ENCODE measurements at regions of chr10 and their contacts with region 1.

Region 1: GRCh38 chr10:33248638-33249037 is 85.8 kb downstream of the NRP1 start:
- DNase-seq: peak; percentile 69 to 78 (median 74)
- H3K4me3 ChIP-seq: peak overlapping the region in 1 of 2 donors; percentile 12
- H3K4me3 Mint-ChIP-seq: peak overlapping the region; percentile 55 to 86 (median 80)
- H3K27ac ChIP-seq: peak overlapping the region; percentile 2
- H3K27ac Mint-ChIP-seq: peak overlapping the region; percentile 61 to 90 (median 82)
- H3K4me1 ChIP-seq: peaks cover 33% of the 10 kb centered on the region
- H3K4me1 Mint-ChIP-seq: peaks cover 26 to 72% (median 37%) of the 10 kb centered on the region in 4 donors
- H3K27me3 ChIP-seq: no peaks in the 10 kb centered on the region
- H3K27me3 Mint-ChIP-seq: no peaks in the 10 kb centered on the region

Region 2: GRCh38 chr10:33199731-33200232 is 48.9 kb before region 1 on chr10:
- CTCF ChIA-PET with region 1: no interaction called
- POLR2A ChIA-PET with region 1: no interaction called
- intact Hi-C with region 1: no loop called
- DNase-seq: no peak
- H3K4me3 ChIP-seq: no peak overlapping the region
- H3K4me3 Mint-ChIP-seq: no peak overlapping the region
- H3K27ac ChIP-seq: no peak overlapping the region
- H3K27ac Mint-ChIP-seq: no peak overlapping the region
- H3K4me1 ChIP-seq: no peaks in the 10 kb centered on the region
- H3K4me1 Mint-ChIP-seq: no peaks in the 10 kb centered on the region
- H3K27me3 ChIP-seq: no peaks in the 10 kb centered on the region
- H3K27me3 Mint-ChIP-seq: peaks cover 0 to 2% of the 10 kb centered on the region in 2 donors

Region 3: GRCh38 chr10:33211106-33211878 is 37.3 kb before region 1 on chr10:
- CTCF ChIA-PET with region 1: no interaction called
- POLR2A ChIA-PET with region 1: no interaction called
- intact Hi-C with region 1: loop called (anchors 5 kb)
- DNase-seq: peak in 3 of 5 donors; percentile 5 to 10 (median 5)
- H3K4me3 ChIP-seq: no peak overlapping the region
- H3K4me3 Mint-ChIP-seq: peak overlapping the region in 5 of 8 donors; percentile 29 to 77 (median 39)
- H3K27ac ChIP-seq: no peak overlapping the region
- H3K27ac Mint-ChIP-seq: peak overlapping the region; percentile 4 to 87 (median 78)
- H3K4me1 ChIP-seq: peaks cover 6% of the 10 kb centered on the region
- H3K4me1 Mint-ChIP-seq: peaks cover 11 to 25% (median 19%) of the 10 kb centered on the region in 4 donors
- H3K27me3 ChIP-seq: no peaks in the 10 kb centered on the region
- H3K27me3 Mint-ChIP-seq: no peaks in the 10 kb centered on the region

Region 4: DNA sequence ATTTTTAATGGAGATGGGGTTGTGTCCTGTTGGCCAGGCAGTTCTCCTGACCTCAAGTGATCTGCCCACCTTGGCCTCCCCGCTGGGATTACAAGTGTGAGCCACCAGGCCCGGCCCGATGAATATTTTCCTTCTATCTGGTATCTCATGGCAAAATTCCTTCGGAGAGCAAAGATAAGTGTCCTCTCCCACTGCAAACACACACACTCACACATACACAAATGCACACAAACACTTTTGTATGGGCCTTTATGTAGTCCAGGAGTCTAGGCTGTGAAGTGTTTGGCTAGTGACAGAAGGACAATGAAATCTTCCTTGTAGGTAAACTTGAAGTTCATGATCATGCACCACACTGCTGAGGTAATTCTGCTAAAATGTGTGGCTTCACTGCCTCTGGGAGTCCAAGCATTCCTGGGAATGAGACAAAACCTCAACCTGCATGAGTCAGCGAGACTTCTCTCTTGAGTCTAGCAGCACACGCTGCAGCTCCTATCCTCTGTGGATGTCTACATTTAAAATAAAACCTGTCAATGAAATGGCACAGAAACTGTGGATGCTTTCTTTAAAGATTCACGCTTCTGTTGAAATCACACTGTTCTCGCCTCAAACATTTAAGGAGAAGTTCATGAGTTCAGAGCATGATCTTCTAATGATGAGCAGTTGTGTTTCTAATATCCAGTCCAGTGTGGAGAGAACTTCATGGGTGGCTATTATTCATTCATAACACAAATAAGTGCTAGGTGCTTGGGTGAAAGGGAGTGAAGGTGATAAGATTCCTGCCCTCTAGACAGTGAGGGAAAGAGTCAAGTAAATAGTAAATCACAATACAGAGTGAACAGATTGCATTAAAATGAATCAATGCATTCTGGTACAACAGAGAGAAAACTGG is 10.7 kb before region 1 on chr10:
- CTCF ChIA-PET with region 1: interaction called, 10 read pairs
- POLR2A ChIA-PET with region 1: interaction called, 3 read pairs
- intact Hi-C with region 1: no loop called
- DNase-seq: no peak
- H3K4me3 ChIP-seq: no peak overlapping the region
- H3K4me3 Mint-ChIP-seq: no peak overlapping the region
- H3K27ac ChIP-seq: no peak overlapping the region
- H3K27ac Mint-ChIP-seq: peak overlapping the region in 1 of 7 donors; percentile 57
- H3K4me1 ChIP-seq: no peaks in the 10 kb centered on the region
- H3K4me1 Mint-ChIP-seq: peaks cover 0 to 1% (median 0%) of the 10 kb centered on the region in 4 donors
- H3K27me3 ChIP-seq: no peaks in the 10 kb centered on the region
- H3K27me3 Mint-ChIP-seq: peaks cover 2 to 3% of the 10 kb centered on the region in 2 donors